T-cell (primary cell): ENCODE measurements at regions of chr16 and their contacts with region 1.

Region 1: GRCh38 chr16:4307215-4308037 is 8.4 kb upstream of the GLIS2 start:
- DNase-seq: peak; percentile 91 to 99 (median 97)
- ATAC-seq: peak; percentile 91 to 95 (median 92)
- H3K4me3 ChIP-seq: peak overlapping the region; percentile 75 to 81
- H3K4me3 Mint-ChIP-seq: peak overlapping the region; percentile 83 to 91 (median 86)
- H3K27ac ChIP-seq: peak overlapping the region; percentile 93
- H3K27ac Mint-ChIP-seq: peak overlapping the region; percentile 92 to 95
- H3K4me1 ChIP-seq: peaks cover 6 to 35% of the 10 kb centered on the region in 2 experiments
- H3K4me1 Mint-ChIP-seq: peaks cover 21 to 28% (median 21%) of the 10 kb centered on the region in 3 donors
- H3K27me3 ChIP-seq: peaks cover 0 to 7% of the 10 kb centered on the region in 2 experiments
- H3K27me3 Mint-ChIP-seq: no peaks in the 10 kb centered on the region

Region 2: DNA sequence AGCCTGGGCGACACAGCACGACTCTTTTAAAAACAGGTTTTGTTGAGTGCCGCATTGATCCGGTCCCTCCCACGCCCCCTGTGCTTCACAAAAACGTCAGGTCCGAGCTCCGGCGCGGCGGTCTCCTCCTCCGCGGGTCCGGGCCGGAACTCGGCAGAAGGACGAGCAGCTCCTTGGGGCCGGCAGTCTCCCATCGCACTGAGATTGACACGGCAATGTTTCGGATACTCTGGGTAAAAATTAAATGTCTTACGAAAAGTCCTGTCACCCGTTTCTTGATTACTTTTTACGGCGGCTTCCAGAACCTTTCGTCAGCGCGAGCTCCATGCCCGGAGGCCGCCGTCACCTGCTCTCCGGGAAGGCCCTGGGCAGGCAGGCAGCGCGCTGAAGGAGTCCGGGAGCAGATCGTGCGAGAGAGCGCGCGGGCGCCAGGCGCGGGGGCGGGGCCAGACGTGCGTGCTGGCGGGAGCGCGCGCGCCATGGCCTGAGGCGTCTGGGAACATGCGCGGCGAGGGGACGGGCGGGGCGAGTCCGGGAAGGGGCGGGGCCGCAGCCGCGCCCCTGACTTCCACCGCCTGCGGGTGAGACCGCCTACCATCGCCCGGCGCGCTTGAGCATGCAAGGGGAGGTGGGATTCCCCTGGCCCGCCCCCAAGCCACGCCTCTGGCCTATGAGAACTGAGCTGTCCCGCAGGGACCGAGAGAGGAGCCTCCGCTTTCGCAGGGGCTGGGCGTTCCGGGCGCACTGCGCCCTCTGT is 53.9 kb before region 1 on chr16:
- CTCF ChIA-PET with region 1: interaction called in 1 of 2 experiments, 10 read pairs
- POLR2A ChIA-PET with region 1: interaction called in 1 of 2 experiments, 4 read pairs
- DNase-seq: peak; percentile 96 to 100 (median 100)
- ATAC-seq: peak; percentile 95 to 98 (median 96)
- H3K4me3 ChIP-seq: peak overlapping the region; percentile 80 to 87
- H3K4me3 Mint-ChIP-seq: peak overlapping the region; percentile 90 to 93 (median 93)
- H3K27ac ChIP-seq: peak overlapping the region; percentile 90
- H3K27ac Mint-ChIP-seq: peak overlapping the region; percentile 94 to 96
- H3K4me1 ChIP-seq: peaks cover 0 to 15% of the 10 kb centered on the region in 2 experiments
- H3K4me1 Mint-ChIP-seq: peaks cover 8 to 13% (median 12%) of the 10 kb centered on the region in 3 donors
- H3K27me3 ChIP-seq: no peaks in the 10 kb centered on the region
- H3K27me3 Mint-ChIP-seq: no peaks in the 10 kb centered on the region

Region 3: DNA sequence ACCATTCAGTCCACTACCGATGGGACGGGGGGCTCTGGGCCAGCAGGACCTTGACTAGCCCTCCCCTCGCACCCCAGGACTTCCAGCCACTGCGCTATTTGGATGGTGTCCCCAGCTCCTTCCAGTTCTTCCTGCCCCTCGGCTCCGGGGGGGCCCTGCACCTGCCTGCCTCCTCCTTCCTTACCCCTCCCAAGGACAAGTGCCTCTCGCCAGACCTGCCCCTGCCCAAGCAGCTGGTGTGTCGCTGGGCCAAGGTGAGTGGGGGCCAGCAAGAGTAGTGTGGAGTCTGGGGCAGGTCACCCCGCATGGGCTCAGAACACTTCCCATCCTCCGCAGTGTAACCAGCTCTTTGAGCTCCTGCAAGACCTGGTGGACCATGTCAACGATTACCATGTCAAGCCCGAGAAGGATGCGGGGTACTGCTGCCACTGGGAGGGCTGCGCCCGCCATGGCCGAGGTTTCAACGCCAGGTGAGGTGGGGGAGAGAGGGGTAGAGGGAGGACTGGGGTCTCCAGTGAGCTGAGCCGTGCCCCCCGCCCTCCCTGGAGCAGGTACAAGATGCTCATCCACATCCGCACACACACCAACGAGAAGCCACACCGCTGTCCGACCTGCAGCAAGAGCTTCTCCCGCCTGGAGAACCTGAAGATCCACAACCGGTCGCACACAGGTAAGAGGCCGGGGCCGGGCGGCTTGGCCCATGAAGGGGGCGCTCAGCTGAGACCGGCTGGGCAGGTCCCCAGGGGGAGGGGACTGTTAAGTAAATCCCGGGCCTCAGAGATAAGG is 27.5 kb after region 1 on chr16:
- CTCF ChIA-PET with region 1: interaction called, 4 to 13 read pairs
- POLR2A ChIA-PET with region 1: no interaction called
- DNase-seq: no peak
- ATAC-seq: no peak
- H3K4me3 ChIP-seq: no peak overlapping the region
- H3K4me3 Mint-ChIP-seq: no peak overlapping the region
- H3K27ac ChIP-seq: no peak overlapping the region
- H3K27ac Mint-ChIP-seq: no peak overlapping the region
- H3K4me1 ChIP-seq: peaks cover 0 to 3% of the 10 kb centered on the region in 2 experiments
- H3K4me1 Mint-ChIP-seq: no peaks in the 10 kb centered on the region
- H3K27me3 ChIP-seq: peaks cover 0 to 24% of the 10 kb centered on the region in 2 experiments
- H3K27me3 Mint-ChIP-seq: no peaks in the 10 kb centered on the region